ENCODE measurements at regions of chr6 and their contacts with region 1.

Region 1: DNA sequence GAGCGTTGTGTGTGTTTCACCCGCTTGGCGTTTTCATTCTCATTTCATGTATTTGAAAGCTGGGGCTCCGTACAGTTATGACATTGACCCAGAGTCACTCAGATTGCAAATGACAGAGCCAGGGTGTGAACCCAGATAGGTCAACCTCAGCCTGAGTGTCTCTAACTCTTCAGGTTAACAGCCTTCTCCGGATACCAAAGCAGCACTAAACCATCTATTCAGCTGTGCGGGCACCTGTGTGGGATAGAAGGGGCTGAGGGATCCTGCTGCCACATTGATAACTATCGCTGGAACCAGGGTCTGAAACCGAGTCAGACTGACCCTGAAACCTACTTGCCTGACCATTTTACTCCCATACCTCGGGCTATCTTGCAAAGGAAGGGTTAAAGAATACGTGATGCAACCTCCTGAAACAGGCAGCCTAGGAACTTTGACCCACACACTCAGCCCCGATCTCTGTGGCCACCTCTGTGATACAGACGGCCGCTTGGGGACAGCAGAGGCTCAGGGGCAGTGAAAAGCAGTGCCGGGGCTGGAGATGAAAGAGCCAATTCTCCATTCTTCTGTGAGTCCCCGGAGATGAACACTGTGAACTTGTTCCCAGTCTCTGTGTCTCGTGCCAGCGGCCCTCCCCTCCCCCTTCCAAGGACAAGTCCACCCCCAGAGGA is 233.5 kb upstream of the QKI start:
- DNase-seq: peak; percentile 36 to 96 (median 92)
- H3K4me3 ChIP-seq: peak overlapping the region in 36 of 59 donors; percentile 4 to 54 (median 36)
- H3K27ac ChIP-seq: peak overlapping the region in 58 of 59 donors; percentile 72 to 100 (median 97)
- H3K27me3 ChIP-seq: no peaks in the 10 kb centered on the region
- CTCF ChIP-seq: peak; percentile 68 to 96 (median 86)

Region 2: DNA sequence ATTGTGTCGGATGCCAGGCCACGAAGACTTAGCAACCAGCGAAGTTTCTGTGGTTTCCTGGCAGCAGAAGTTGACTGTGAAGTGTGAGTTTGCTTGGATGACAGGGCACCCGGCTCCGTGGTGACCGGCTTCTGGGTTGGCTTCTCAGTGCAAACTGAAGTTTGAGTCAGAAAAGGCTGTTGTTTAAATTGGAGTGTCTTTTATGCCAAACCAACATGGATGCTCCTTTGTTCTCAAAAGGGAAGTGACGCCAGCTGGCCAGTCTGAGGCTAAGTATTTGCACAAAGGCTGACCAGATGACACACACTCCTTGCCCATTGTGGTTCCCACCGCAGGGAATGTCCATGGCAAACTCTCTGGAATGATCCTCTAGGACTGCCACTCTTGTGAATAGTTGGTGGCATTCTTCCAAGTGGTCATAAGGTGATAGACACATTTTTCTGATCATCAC is 68.7 kb after region 1 on chr6:
- intact Hi-C with region 1: loop called (anchors 2 to 5 kb)
- DNase-seq: peak in 4 of 10 donors; percentile 34 to 70 (median 56)
- H3K4me3 ChIP-seq: no peak overlapping the region
- H3K27ac ChIP-seq: peak overlapping the region; percentile 77 to 100 (median 98)
- H3K27me3 ChIP-seq: no peaks in the 10 kb centered on the region
- CTCF ChIP-seq: no peak

Region 3: GRCh38 chr6:163314791-163315470 is 133.9 kb after region 1 on chr6:
- intact Hi-C with region 1: loop called in 1 of 2 experiments (anchors 2 kb)
- DNase-seq: peak in 2 of 10 donors; percentile 49 to 60
- H3K4me3 ChIP-seq: peak overlapping the region in 31 of 59 donors; percentile 1 to 48 (median 24)
- H3K27ac ChIP-seq: peak overlapping the region; percentile 62 to 100 (median 97)
- H3K27me3 ChIP-seq: no peaks in the 10 kb centered on the region
- CTCF ChIP-seq: peak in 4 of 56 donors; percentile 5 to 19 (median 14)

Region 4: DNA sequence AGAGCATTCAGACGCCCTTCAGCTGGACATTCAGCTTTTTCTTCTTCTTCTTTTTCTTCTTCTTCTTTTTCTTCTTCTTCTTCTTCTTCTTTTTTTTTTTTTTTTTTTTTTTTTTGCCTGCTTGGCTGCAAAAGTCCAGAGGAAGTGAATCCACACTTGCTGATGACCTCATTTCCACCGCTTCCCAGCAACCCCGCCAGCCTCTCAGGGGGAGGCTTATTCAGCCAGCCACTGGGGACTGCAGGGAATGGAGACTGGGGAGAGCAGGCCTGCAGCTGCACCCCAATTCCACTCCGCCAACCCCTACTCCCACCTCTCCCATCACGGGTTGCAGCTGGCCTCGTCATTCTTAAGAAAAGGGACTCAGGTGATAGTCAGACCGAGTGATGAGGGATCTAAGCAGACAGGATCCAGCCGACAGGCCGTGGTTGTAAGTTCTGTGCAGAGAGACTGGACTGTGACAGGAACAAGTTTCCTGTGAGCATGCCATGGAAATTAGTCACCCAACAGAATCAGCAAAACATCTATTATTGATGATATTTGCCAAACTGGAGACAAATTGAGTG is 174.5 kb after region 1 on chr6:
- intact Hi-C with region 1: loop called (anchors 5 kb)
- DNase-seq: peak in 7 of 10 donors; percentile 65 to 81 (median 74)
- H3K4me3 ChIP-seq: peak overlapping the region in 41 of 59 donors; percentile 1 to 48 (median 26)
- H3K27ac ChIP-seq: peak overlapping the region; percentile 51 to 100 (median 97)
- H3K27me3 ChIP-seq: no peaks in the 10 kb centered on the region
- CTCF ChIP-seq: peak in 2 of 56 donors; percentile 10 to 14

Region 5: DNA sequence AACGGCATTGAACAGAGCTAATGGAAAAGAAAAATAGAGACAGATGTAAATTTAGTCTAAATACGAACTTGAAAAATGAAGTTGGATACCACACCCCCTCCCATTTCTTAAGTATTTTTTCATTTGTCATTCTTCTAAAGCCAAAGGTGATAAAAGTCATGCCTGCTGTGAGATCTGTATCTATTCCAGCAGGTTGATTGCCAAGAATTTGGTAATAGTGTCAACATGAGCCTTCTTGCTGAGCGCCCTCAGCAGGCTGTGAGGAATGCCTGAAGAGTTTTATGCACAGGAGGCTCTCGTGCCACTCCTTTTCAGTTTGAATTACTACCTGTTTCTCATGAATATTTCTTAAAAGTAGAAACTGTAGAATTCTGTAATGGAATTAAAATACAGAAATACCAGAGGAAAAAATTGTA is 398.9 kb after region 1 on chr6:
- intact Hi-C with region 1: loop called (anchors 5 to 10 kb)
- DNase-seq: no peak
- H3K4me3 ChIP-seq: peak overlapping the region in 3 of 59 donors; percentile 6 to 19 (median 14)
- H3K27ac ChIP-seq: peak overlapping the region in 55 of 59 donors; percentile 10 to 86 (median 64)
- H3K27me3 ChIP-seq: no peaks in the 10 kb centered on the region
- CTCF ChIP-seq: peak in 29 of 56 donors; percentile 5 to 53 (median 27)

Region 6: GRCh38 chr6:163956571-163957407 is 775.8 kb after region 1 on chr6:
- intact Hi-C with region 1: loop called (anchors 5 to 10 kb)
- DNase-seq: peak; percentile 25 to 83 (median 74)
- H3K4me3 ChIP-seq: peak overlapping the region in 18 of 59 donors; percentile 1 to 45 (median 20)
- H3K27ac ChIP-seq: peak overlapping the region in 9 of 59 donors; percentile 0 to 35 (median 14)
- H3K27me3 ChIP-seq: no peaks in the 10 kb centered on the region
- CTCF ChIP-seq: peak; percentile 52 to 96 (median 89)

Measured in dorsolateral prefrontal cortex (tissue), 120 donors.